Activated CD4-positive, alpha-beta T cell treated with anti-CD3 and anti-CD28 coated beads for 36 hours (primary cell): ENCODE measurements at regions of chr7 and their contacts with region 1.

Region 1: GRCh38 chr7:55951637-55952351 is at the start of gene MRPS17:
- DNase-seq: peak; percentile 96
- ATAC-seq: peak; percentile 100
- H3K4me3 Mint-ChIP-seq: peak within 1 kb of the TSS; percentile 98
- H3K27ac Mint-ChIP-seq: peak within 1 kb of the TSS; percentile 97
- H3K4me1 Mint-ChIP-seq: peaks cover 16% of the 10 kb centered on the region
- H3K27me3 Mint-ChIP-seq: peaks cover 2% of the 10 kb centered on the region
- total RNA-seq, gene MRPS17: 16.6 to 26.8 TPM

Region 2: GRCh38 chr7:54758702-54759592 is 1192.8 kb before region 1 on chr7 and contains the start of gene SEC61G:
- CTCF ChIA-PET with region 1: no interaction called
- POLR2A ChIA-PET with region 1: no interaction called
- intact Hi-C with region 1: loop called in 1 of 2 experiments (anchors 2 kb)
- DNase-seq: peak; percentile 97
- ATAC-seq: peak; percentile 91
- H3K4me3 Mint-ChIP-seq: peak within 1 kb of the TSS; percentile 91
- H3K27ac Mint-ChIP-seq: peak within 1 kb of the TSS; percentile 95
- H3K4me1 Mint-ChIP-seq: peaks cover 20% of the 10 kb centered on the region
- H3K27me3 Mint-ChIP-seq: peaks cover 2% of the 10 kb centered on the region
- total RNA-seq, gene SEC61G: 78.4 to 191 TPM

Region 3: DNA sequence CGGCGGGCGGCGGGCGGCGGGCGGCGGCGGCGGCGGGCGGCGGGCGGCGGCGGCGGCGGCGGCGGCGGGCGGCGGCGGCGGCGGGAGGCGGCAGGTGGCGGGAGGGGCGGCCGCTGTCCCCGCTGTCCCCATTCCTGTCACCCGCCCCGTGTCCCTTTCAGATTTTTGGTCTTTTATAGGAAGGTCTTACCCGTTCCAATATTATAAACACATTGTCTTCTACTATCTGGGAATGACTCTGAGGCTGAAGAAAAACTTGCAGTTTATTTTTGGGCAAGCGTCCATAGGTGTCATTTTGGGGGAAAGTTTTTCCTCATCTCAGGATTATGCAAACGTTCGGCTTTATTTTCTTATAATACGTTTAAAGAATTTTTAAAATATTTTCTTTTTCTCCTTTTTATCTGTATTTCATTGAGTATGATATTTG is 64.0 kb before region 1 on chr7:
- CTCF ChIA-PET with region 1: no interaction called
- POLR2A ChIA-PET with region 1: no interaction called
- intact Hi-C with region 1: loop called (anchors 1 to 5 kb)
- DNase-seq: peak; percentile 21
- ATAC-seq: no peak
- H3K4me3 Mint-ChIP-seq: peak overlapping the region; percentile 80
- H3K27ac Mint-ChIP-seq: peak overlapping the region; percentile 82
- H3K4me1 Mint-ChIP-seq: peaks cover 5% of the 10 kb centered on the region
- H3K27me3 Mint-ChIP-seq: no peaks in the 10 kb centered on the region

Region 4: GRCh38 chr7:56051339-56052191 is 99.8 kb after region 1 on chr7 and contains the starts of genes CCT6A and PSPH:
- CTCF ChIA-PET with region 1: no interaction called
- POLR2A ChIA-PET with region 1: no interaction called
- intact Hi-C with region 1: loop called in 1 of 2 experiments (anchors 1 kb)
- DNase-seq: peak; percentile 95
- ATAC-seq: peak; percentile 95
- H3K4me3 Mint-ChIP-seq: peak within 1 kb of the TSS; percentile 96
- H3K27ac Mint-ChIP-seq: peak within 1 kb of the TSS; percentile 95
- H3K4me1 Mint-ChIP-seq: peaks cover 49% of the 10 kb centered on the region
- H3K27me3 Mint-ChIP-seq: no peaks in the 10 kb centered on the region
- total RNA-seq, gene CCT6A: 182 to 237 TPM
- total RNA-seq, gene PSPH: 24.4 to 30.3 TPM

Region 5: DNA sequence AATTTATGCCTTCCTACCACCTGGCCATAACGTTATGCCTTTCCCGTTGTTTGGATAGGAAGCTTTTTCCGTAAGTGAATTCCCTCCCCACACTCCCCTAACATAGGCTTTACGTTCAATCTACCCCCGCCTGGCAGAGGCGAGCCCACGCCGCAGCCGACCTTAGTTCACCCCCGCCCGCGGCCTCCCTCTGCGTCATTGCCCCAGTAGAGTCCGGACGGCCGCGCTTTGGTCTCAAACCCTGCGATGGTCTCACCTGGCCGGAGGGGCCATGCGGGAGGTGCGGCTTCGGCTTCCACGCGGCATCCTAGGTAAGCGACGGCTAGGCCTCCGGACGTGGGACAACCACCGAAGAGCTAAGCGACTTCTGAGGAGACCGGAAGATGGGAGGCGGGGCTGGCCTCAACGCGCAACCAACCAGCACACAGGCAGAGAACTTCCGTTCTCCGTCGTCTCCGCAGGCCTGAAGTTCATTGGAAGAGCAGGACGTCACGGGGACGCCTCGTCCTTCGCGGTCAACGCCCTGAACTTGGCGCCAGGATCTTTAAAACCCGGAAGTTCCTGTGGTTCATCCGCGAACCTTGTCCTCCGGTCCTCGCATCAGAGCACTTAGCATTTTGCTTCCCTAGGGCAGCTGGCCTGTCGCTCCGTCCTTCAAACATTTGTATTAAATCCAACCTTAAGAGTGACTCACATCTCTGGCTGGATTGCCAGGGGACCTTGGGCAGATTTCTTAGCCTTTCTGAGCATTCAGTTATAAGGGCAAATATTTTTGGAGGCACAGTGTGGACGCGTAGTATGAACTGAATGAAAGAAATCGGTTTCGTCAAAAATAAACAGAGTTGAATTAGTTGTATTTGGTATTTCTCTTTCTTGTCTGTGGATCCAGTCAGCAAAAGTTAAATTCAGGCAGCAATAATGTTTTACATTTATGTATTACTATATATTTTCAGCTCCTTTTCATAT is 154.6 kb after region 1 on chr7 and contains the start of gene CHCHD2:
- CTCF ChIA-PET with region 1: no interaction called
- POLR2A ChIA-PET with region 1: no interaction called
- intact Hi-C with region 1: loop called (anchors 1 to 5 kb)
- DNase-seq: peak; percentile 96
- ATAC-seq: peak; percentile 98
- H3K4me3 Mint-ChIP-seq: peak within 1 kb of the TSS; percentile 90
- H3K27ac Mint-ChIP-seq: peak within 1 kb of the TSS; percentile 99
- H3K4me1 Mint-ChIP-seq: peaks cover 37% of the 10 kb centered on the region
- H3K27me3 Mint-ChIP-seq: no peaks in the 10 kb centered on the region
- total RNA-seq, gene CHCHD2: 537 to 693 TPM

Region 6: GRCh38 chr7:56479748-56480147 is 528.0 kb after region 1 on chr7:
- CTCF ChIA-PET with region 1: no interaction called
- POLR2A ChIA-PET with region 1: no interaction called
- intact Hi-C with region 1: no loop called
- DNase-seq: no peak
- ATAC-seq: no peak
- H3K4me3 Mint-ChIP-seq: no peak overlapping the region
- H3K27ac Mint-ChIP-seq: no peak overlapping the region
- H3K4me1 Mint-ChIP-seq: no peaks in the 10 kb centered on the region
- H3K27me3 Mint-ChIP-seq: no peaks in the 10 kb centered on the region